ENCODE measurements at regions of chr19 and their contacts with region 1.

Region 1: GRCh38 chr19:6171566-6171965 is 36.1 kb downstream of the ACSBG2 start:
- DNase-seq: no peak
- H3K4me3 ChIP-seq: no peak overlapping the region
- H3K27ac ChIP-seq: no peak overlapping the region
- H3K4me1 ChIP-seq: no peaks in the 10 kb centered on the region
- H3K27me3 ChIP-seq: no peaks in the 10 kb centered on the region
- CTCF ChIP-seq: no peak
- EP300 ChIP-seq: no peak
- POLR2A ChIP-seq: no peak

Region 2: DNA sequence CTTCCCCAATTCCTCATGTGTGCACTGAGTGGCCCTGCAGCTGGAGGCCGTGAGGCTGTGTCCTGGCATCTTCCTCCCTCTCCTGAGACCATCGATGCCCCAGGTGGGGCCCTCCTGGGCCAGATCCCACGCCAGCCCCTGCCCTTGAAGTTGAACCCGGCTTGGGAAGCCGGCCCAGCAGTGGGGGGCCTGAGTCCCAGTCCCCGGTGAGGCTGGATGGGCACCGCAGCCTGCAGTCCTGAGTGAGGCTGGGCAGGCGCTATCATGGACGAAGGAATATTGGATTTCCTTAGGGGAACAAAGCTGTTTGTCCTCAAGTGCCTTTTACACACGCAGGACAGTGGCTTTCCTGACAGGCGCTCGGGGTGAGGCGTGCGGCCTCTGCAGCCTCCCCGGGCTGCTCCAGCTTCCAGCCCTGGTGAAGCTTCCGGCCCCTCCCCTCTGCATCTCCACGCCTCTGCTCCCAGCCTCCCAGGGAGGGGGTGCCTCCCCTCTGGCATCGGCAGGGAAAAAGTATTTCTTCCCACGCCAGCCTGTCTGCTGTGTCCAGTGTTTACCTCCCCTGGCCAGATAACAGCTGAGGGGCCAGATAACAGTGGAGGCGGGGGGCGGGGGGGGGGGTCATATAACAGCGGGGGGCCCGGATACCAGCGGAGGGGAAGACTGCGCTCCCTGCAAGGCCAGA is 1043.2 kb before region 1 on chr19:
- intact Hi-C with region 1: no loop called
- DNase-seq: peak; percentile 87 to 89 (median 87)
- H3K4me3 ChIP-seq: no peak overlapping the region
- H3K27ac ChIP-seq: peak overlapping the region in 1 of 2 donors; percentile 62
- H3K4me1 ChIP-seq: peaks cover 27% of the 10 kb centered on the region
- H3K27me3 ChIP-seq: no peaks in the 10 kb centered on the region
- CTCF ChIP-seq: no peak
- EP300 ChIP-seq: no peak
- POLR2A ChIP-seq: no peak

Region 3: GRCh38 chr19:6489278-6490061 is 317.9 kb after region 1 on chr19:
- intact Hi-C with region 1: no loop called
- DNase-seq: no peak
- H3K4me3 ChIP-seq: no peak overlapping the region
- H3K27ac ChIP-seq: no peak overlapping the region
- H3K4me1 ChIP-seq: no peaks in the 10 kb centered on the region
- H3K27me3 ChIP-seq: no peaks in the 10 kb centered on the region
- CTCF ChIP-seq: no peak
- EP300 ChIP-seq: no peak
- POLR2A ChIP-seq: no peak

Region 4: DNA sequence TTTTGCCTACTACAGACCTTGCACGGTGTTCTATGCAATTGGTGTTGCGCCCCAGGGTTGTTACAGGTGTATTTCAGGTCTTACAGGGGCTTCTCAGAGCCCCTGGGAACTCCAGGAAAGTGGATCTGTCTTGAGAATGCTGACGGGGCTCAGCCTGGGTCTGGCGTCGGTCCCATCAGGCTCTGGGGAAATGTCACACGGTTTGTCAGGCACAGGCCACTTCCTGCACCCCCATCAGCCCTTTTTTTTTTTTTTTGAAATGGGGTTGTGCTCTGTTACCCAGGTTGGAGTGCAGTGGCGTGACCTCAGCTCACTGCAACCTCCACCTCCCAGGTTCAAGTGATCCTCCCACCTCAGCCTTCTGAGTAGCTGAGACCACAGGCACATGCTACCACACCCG is 1547.1 kb after region 1 on chr19:
- intact Hi-C with region 1: loop called in 1 of 4 experiments (anchors 10 kb)
- DNase-seq: no peak
- H3K4me3 ChIP-seq: no peak overlapping the region
- H3K27ac ChIP-seq: no peak overlapping the region
- H3K4me1 ChIP-seq: no peaks in the 10 kb centered on the region
- H3K27me3 ChIP-seq: no peaks in the 10 kb centered on the region
- CTCF ChIP-seq: no peak
- EP300 ChIP-seq: no peak
- POLR2A ChIP-seq: no peak